Caco-2 (cell line): ENCODE measurements at regions of chr9 and their contacts with region 1.

Region 1: GRCh38 chr9:89648247-89649000 is 43.6 kb downstream of the GADD45G start:
- DNase-seq: peak; percentile 67 to 81
- H3K4me3 ChIP-seq: no peak overlapping the region
- H3K4me3 Mint-ChIP-seq: peak overlapping the region; percentile 43
- H3K27ac Mint-ChIP-seq: peak overlapping the region; percentile 77
- H3K4me1 ChIP-seq: peaks cover 35% of the 10 kb centered on the region
- H3K4me1 Mint-ChIP-seq: peaks cover 7% of the 10 kb centered on the region
- H3K27me3 ChIP-seq: no peaks in the 10 kb centered on the region
- H3K27me3 Mint-ChIP-seq: no peaks in the 10 kb centered on the region
- CTCF ChIP-seq: no peak

Region 2: GRCh38 chr9:89721176-89721700 is 72.8 kb after region 1 on chr9:
- CTCF ChIA-PET with region 1: no interaction called
- POLR2A ChIA-PET with region 1: no interaction called
- intact Hi-C with region 1: loop called (anchors 1 kb)
- DNase-seq: peak; percentile 40 to 53
- H3K4me3 ChIP-seq: no peak overlapping the region
- H3K4me3 Mint-ChIP-seq: no peak overlapping the region
- H3K27ac Mint-ChIP-seq: no peak overlapping the region
- H3K4me1 ChIP-seq: no peaks in the 10 kb centered on the region; the same call in 1 of the 2 replicates
- H3K4me1 Mint-ChIP-seq: no peaks in the 10 kb centered on the region
- H3K27me3 ChIP-seq: no peaks in the 10 kb centered on the region
- H3K27me3 Mint-ChIP-seq: no peaks in the 10 kb centered on the region
- CTCF ChIP-seq: no peak

Region 3: GRCh38 chr9:89945133-89945532 is 296.7 kb after region 1 on chr9:
- CTCF ChIA-PET with region 1: no interaction called
- POLR2A ChIA-PET with region 1: no interaction called
- intact Hi-C with region 1: no loop called
- DNase-seq: no peak
- H3K4me3 ChIP-seq: no peak overlapping the region
- H3K4me3 Mint-ChIP-seq: no peak overlapping the region
- H3K27ac Mint-ChIP-seq: no peak overlapping the region
- H3K4me1 ChIP-seq: no peaks in the 10 kb centered on the region; the same call in 1 of the 2 replicates
- H3K4me1 Mint-ChIP-seq: no peaks in the 10 kb centered on the region
- H3K27me3 ChIP-seq: no peaks in the 10 kb centered on the region
- H3K27me3 Mint-ChIP-seq: peaks cover 2% of the 10 kb centered on the region
- CTCF ChIP-seq: peak in 1 of 2 experiments; percentile 4